Gastrocnemius medialis (tissue), 4 donors: ENCODE measurements at regions of chr6 and their contacts with region 1.

Region 1: GRCh38 chr6:46221222-46221793 is 50.5 kb upstream of the ENPP5 start:
- DNase-seq: no peak
- ATAC-seq: peak; percentile 50 to 61
- H3K4me3 ChIP-seq: no peak overlapping the region
- H3K27ac ChIP-seq: no peak overlapping the region
- H3K4me1 ChIP-seq: peaks cover 5 to 21% of the 10 kb centered on the region in 2 donors
- H3K27me3 ChIP-seq: no peaks in the 10 kb centered on the region
- CTCF ChIP-seq: peak; percentile 62 to 90 (median 84)
- POLR2A ChIP-seq: no peak

Region 2: DNA sequence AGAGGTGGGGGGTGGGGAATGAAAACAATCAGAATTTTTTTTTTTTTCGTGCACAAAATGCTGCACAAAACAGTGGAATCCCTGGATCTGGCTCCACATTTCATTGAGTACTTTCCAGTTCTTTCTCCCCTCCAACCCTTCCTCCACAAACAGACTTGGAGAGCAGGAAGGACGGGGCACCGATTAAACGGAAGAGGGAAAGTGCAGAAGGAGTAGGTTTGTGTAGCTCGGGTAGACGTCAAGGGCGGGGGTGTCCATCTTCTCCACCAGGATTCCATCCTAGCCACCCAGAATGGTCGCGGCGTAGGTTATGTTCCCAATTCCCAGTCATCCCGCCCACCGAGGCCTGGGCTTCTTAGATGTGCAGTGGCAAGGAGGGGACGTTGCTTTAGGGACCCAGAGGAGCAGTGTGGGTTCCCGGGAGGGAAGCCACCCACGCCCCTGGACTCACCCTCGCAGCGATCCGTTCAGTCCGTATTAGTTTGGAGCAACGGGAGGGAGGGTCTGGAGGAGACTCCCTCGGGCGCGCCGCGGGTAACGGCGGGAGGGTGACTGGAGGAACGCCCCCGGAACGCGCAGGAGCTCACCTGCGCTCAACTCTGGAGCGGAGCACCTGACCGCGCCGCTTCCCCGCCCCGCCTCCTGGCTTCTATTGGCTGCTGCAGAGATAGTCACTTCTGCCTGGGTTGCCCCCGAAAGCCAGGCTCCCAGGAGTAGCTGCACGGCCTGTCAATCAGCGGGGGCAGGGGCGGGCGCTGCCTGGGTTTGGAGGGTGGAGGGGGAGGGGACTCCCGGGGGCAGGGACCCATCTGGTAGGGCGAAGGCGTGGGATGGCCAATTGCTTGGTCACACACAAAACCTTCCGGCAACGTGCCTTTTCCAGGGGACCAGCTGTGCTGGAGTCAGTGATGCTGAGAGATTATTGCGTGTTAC is 50.7 kb before region 1 on chr6 and contains the start of gene ENPP5:
- in situ Hi-C with region 1: no loop called
- intact Hi-C with region 1: no loop called
- DNase-seq: peak; percentile 88 to 93
- ATAC-seq: peak; percentile 82 to 90
- H3K4me3 ChIP-seq: peak within 1 kb of the TSS; percentile 71 to 91 (median 81)
- H3K27ac ChIP-seq: peak within 1 kb of the TSS; percentile 74 to 92 (median 86)
- H3K4me1 ChIP-seq: peaks cover 43 to 47% of the 10 kb centered on the region in 2 donors
- H3K27me3 ChIP-seq: no peaks in the 10 kb centered on the region
- CTCF ChIP-seq: no peak
- POLR2A ChIP-seq: peak; percentile 75 to 83
- total RNA-seq, gene ENPP5: 9.9 to 28.3 (median 19.2) TPM

Region 3: GRCh38 chr6:46243754-46244153 is 22.4 kb after region 1 on chr6:
- in situ Hi-C with region 1: no loop called
- intact Hi-C with region 1: no loop called
- DNase-seq: peak; percentile 38 to 75
- ATAC-seq: peak; percentile 82 to 91
- H3K4me3 ChIP-seq: no peak overlapping the region
- H3K27ac ChIP-seq: peak overlapping the region in 3 of 4 donors; percentile 32 to 62 (median 55)
- H3K4me1 ChIP-seq: peaks cover 30 to 70% of the 10 kb centered on the region in 2 donors
- H3K27me3 ChIP-seq: no peaks in the 10 kb centered on the region
- CTCF ChIP-seq: no peak
- POLR2A ChIP-seq: no peak

Region 4: GRCh38 chr6:46410334-46410953 is 189.1 kb after region 1 on chr6:
- in situ Hi-C with region 1: loop called (anchors 5 to 25 kb)
- intact Hi-C with region 1: loop called (anchors 1 kb)
- DNase-seq: peak in 1 of 2 donors; percentile 28
- ATAC-seq: peak in 1 of 2 donors; percentile 51
- H3K4me3 ChIP-seq: no peak overlapping the region
- H3K27ac ChIP-seq: peak overlapping the region in 3 of 4 donors; percentile 12 to 34 (median 25)
- H3K4me1 ChIP-seq: peaks cover 36 to 63% of the 10 kb centered on the region in 2 donors
- H3K27me3 ChIP-seq: no peaks in the 10 kb centered on the region
- CTCF ChIP-seq: peak; percentile 44 to 94 (median 79)
- POLR2A ChIP-seq: no peak

Region 5: DNA sequence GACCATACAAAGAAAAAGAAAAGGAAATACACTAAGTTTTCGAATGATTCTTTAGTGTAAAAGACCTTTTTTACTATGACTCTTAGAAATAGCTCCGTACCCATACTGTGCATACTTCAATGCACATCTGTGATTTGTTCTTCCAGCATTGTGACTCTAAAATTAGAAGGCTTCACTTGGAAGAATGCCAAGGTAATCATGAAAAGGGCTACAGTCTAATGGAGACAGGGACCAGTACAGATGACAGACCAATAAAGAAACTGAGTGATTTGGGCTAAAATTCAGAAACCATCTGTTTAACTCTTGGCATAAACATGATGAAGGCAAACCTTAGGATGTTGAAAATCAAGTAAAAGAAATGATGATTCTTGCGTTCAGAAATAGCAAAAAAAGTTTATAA is 385.0 kb after region 1 on chr6:
- in situ Hi-C with region 1: loop called in 1 of 4 experiments (anchors 25 kb)
- intact Hi-C with region 1: no loop called
- DNase-seq: no peak
- ATAC-seq: no peak
- H3K4me3 ChIP-seq: no peak overlapping the region
- H3K27ac ChIP-seq: no peak overlapping the region
- H3K4me1 ChIP-seq: peaks cover 3 to 11% of the 10 kb centered on the region in 2 donors
- H3K27me3 ChIP-seq: no peaks in the 10 kb centered on the region
- CTCF ChIP-seq: no peak
- POLR2A ChIP-seq: no peak

Region 6: DNA sequence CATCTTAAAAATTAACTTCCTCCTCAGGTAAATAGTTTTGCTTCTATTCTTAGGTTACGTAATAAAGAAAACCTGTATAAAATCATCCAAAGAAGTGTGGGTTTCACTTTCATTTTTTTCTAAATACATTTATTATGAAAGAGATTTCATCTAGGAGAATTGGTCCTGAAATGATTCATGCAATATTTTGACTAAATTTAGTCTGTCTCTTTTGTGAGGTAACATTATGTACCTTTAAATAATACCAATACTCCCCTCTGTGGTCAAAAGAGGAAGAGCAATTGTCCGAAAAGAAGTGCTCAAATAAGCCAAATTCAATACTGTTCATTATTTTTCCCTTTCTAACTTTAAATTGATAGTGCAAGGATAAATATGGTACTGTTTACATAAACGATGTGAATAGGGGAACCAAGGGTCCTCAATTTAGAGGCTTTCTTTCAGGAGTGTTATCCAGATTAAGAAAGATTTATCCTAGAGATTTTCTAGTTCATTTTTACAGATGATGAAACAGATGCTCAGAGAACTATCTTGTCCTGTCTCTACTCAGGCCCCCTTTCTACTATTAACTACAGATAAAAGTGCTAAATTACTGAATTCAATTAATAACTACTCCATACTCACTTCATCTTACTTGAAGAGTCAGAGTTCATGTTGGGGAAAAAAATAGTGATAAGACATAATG is 405.1 kb after region 1 on chr6:
- in situ Hi-C with region 1: loop called in 2 of 4 experiments (anchors 25 kb)
- intact Hi-C with region 1: loop called (anchors 2 kb)
- DNase-seq: no peak
- ATAC-seq: peak; percentile 62 to 73
- H3K4me3 ChIP-seq: no peak overlapping the region
- H3K27ac ChIP-seq: no peak overlapping the region
- H3K4me1 ChIP-seq: peaks cover 6% of the 10 kb centered on the region in 2 donors
- H3K27me3 ChIP-seq: no peaks in the 10 kb centered on the region
- CTCF ChIP-seq: peak; percentile 53 to 75 (median 63)
- POLR2A ChIP-seq: no peak

Region 7: DNA sequence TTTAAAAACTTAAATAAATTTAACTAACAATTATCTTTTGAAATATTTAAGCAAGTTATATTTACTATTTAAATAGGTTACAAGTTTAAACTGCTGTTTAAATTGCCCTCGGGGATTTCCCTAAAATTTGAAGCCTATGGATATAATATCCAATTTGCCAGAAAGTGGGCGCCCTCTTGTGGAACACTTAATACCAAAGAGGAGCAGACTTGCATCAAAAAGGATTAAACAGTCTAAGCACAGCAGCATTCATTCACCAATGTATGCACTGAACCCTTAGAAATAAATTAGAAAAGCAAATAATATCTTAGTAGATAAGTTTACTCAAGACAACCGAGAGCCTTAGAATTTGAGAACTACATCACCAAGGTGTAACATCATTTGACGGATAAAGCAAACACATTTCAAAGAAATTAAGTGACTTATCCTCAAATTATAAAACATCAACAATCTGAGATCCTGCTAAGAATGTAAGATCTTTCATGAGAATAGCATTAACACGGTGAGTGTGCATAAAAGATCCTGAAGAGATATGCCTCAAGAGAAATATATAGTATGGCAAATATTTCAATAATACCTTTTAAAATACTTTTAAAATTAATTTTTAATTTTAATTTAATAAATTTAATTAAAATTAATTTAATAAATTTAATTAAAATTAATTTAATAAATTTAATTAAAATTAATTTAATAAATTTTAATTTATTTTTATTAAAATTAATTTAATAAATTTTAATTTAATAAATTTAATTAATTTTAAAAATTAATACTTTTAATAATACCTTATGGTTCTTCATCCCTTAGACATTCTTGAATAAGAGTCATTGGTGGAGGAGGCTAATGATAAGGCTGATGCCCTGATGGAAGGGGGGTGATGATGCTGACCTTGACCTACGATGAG is 560.4 kb after region 1 on chr6:
- in situ Hi-C with region 1: no loop called
- intact Hi-C with region 1: loop called (anchors 5 kb)
- DNase-seq: peak in 1 of 2 donors; percentile 18
- ATAC-seq: no peak
- H3K4me3 ChIP-seq: no peak overlapping the region
- H3K27ac ChIP-seq: no peak overlapping the region
- H3K4me1 ChIP-seq: no peaks in the 10 kb centered on the region
- H3K27me3 ChIP-seq: no peaks in the 10 kb centered on the region
- CTCF ChIP-seq: peak in 4 of 5 experiments; percentile 33 to 63 (median 42)
- POLR2A ChIP-seq: no peak